Right lobe of liver (tissue), 6 donors: ENCODE measurements at regions of chr4 and their contacts with region 1.

Region 1: GRCh38 chr4:1899149-1900086 is 28.2 kb downstream of the NSD2 start:
- DNase-seq: peak; percentile 72 to 77 (median 75)
- ATAC-seq: peak; percentile 96 to 100 (median 98)
- H3K4me3 ChIP-seq: no peak overlapping the region
- H3K27ac ChIP-seq: no peak overlapping the region
- H3K4me1 ChIP-seq: no peaks in the 10 kb centered on the region
- H3K27me3 ChIP-seq: no peaks in the 10 kb centered on the region
- CTCF ChIP-seq: peak; percentile 87 to 93 (median 88)
- POLR2A ChIP-seq: no peak

Region 2: GRCh38 chr4:1746265-1746691 is 153.1 kb before region 1 on chr4:
- intact Hi-C with region 1: loop called (anchors 10 kb)
- DNase-seq: peak in 2 of 3 donors; percentile 68
- ATAC-seq: peak; percentile 6 to 16 (median 14)
- H3K4me3 ChIP-seq: no peak overlapping the region
- H3K27ac ChIP-seq: no peak overlapping the region
- H3K4me1 ChIP-seq: peaks cover 0 to 17% (median 3%) of the 10 kb centered on the region in 4 donors
- H3K27me3 ChIP-seq: no peaks in the 10 kb centered on the region
- CTCF ChIP-seq: peak; percentile 42 to 57 (median 54)
- POLR2A ChIP-seq: no peak

Region 3: GRCh38 chr4:1752284-1753041 is 147.0 kb before region 1 on chr4:
- intact Hi-C with region 1: loop called (anchors 10 kb)
- DNase-seq: no peak
- ATAC-seq: peak; percentile 1 to 20 (median 9)
- H3K4me3 ChIP-seq: no peak overlapping the region
- H3K27ac ChIP-seq: no peak overlapping the region
- H3K4me1 ChIP-seq: no peaks in the 10 kb centered on the region
- H3K27me3 ChIP-seq: no peaks in the 10 kb centered on the region
- CTCF ChIP-seq: no peak
- POLR2A ChIP-seq: no peak

Region 4: DNA sequence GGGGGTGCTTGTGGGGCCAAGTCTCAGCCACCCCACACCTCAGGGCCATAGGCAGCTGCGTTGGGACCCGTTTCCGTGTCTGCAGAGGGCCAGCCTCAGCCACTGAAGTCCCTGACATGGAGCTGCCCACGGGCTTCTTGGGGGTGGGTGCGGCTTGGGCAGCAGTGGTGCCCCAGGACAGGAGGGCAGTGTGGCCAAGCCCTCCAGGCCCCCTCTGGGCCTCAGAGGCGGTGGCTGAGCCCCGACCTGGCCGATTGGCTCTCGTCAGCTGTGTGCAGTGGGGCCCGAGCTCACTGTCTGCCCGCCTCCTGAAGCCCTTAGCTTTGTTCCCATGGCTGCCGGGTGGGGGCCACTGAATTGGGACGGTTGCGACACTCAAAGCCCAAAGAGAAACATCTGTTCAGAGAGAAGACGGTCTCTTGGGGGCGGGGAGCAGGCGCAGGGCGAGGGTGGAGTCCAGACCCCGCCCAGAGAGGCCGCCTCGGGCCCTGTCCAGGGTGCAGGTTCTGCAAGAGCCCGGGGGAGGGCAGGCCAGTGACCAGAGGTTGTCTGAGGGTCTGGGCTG is 97.2 kb before region 1 on chr4:
- intact Hi-C with region 1: no loop called
- DNase-seq: no peak
- ATAC-seq: no peak
- H3K4me3 ChIP-seq: no peak overlapping the region
- H3K27ac ChIP-seq: no peak overlapping the region
- H3K4me1 ChIP-seq: peaks cover 0 to 15% (median 7%) of the 10 kb centered on the region in 4 donors
- H3K27me3 ChIP-seq: no peaks in the 10 kb centered on the region
- CTCF ChIP-seq: no peak
- POLR2A ChIP-seq: no peak

Region 5: DNA sequence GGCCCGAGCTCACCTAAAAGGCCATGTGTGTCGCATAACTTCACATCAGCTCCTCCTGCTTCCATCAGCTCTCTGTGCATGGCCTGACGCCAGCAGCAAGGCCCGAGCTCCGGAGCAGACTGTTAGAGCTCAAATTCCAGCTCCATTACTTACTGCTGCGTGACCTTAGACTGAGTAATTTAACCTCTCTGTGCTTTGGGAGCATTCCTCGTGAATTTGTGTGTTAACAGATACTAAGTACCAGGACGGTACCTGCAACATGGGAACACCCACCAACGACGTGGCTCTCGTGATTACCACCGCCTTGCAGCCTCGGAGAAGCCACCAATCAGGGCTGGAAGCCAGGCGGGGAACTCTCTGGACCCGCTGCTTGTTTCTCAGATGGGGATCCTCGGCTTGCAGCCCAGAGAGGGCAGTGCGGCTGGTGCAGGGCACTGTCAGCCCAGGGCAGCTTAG is 56.4 kb before region 1 on chr4:
- intact Hi-C with region 1: loop called in 1 of 2 experiments (anchors 10 kb)
- DNase-seq: no peak
- ATAC-seq: no peak
- H3K4me3 ChIP-seq: no peak overlapping the region
- H3K27ac ChIP-seq: no peak overlapping the region
- H3K4me1 ChIP-seq: no peaks in the 10 kb centered on the region
- H3K27me3 ChIP-seq: no peaks in the 10 kb centered on the region
- CTCF ChIP-seq: no peak
- POLR2A ChIP-seq: no peak